ENCODE measurements at regions of chr13 and their contacts with region 1.

Region 1: GRCh38 chr13:56039992-56040391 is 1100.7 kb upstream of the PRR20A start:
- DNase-seq: no peak
- ATAC-seq: no peak
- H3K4me3 ChIP-seq: no peak overlapping the region
- H3K27ac ChIP-seq: no peak overlapping the region
- H3K4me1 ChIP-seq: no peaks in the 10 kb centered on the region
- H3K27me3 ChIP-seq: no peaks in the 10 kb centered on the region
- CTCF ChIP-seq: no peak

Region 2: GRCh38 chr13:55977436-55977835 is 62.6 kb before region 1 on chr13:
- intact Hi-C with region 1: no loop called
- DNase-seq: no peak
- ATAC-seq: no peak
- H3K4me3 ChIP-seq: no peak overlapping the region
- H3K27ac ChIP-seq: no peak overlapping the region
- H3K4me1 ChIP-seq: no peaks in the 10 kb centered on the region
- H3K27me3 ChIP-seq: no peaks in the 10 kb centered on the region
- CTCF ChIP-seq: no peak

Region 3: GRCh38 chr13:55999709-56000108 is 40.3 kb before region 1 on chr13:
- intact Hi-C with region 1: no loop called
- DNase-seq: no peak
- ATAC-seq: no peak
- H3K4me3 ChIP-seq: no peak overlapping the region
- H3K27ac ChIP-seq: no peak overlapping the region
- H3K4me1 ChIP-seq: no peaks in the 10 kb centered on the region
- H3K27me3 ChIP-seq: no peaks in the 10 kb centered on the region
- CTCF ChIP-seq: no peak

Region 4: GRCh38 chr13:56102641-56103040 is 62.6 kb after region 1 on chr13:
- intact Hi-C with region 1: loop called in 1 of 10 experiments (anchors 10 kb)
- DNase-seq: no peak
- ATAC-seq: no peak
- H3K4me3 ChIP-seq: no peak overlapping the region
- H3K27ac ChIP-seq: no peak overlapping the region
- H3K4me1 ChIP-seq: no peaks in the 10 kb centered on the region
- H3K27me3 ChIP-seq: no peaks in the 10 kb centered on the region
- CTCF ChIP-seq: no peak